PC-9 (cell line): ENCODE measurements at regions of chr3 and their contacts with region 1.

Region 1: DNA sequence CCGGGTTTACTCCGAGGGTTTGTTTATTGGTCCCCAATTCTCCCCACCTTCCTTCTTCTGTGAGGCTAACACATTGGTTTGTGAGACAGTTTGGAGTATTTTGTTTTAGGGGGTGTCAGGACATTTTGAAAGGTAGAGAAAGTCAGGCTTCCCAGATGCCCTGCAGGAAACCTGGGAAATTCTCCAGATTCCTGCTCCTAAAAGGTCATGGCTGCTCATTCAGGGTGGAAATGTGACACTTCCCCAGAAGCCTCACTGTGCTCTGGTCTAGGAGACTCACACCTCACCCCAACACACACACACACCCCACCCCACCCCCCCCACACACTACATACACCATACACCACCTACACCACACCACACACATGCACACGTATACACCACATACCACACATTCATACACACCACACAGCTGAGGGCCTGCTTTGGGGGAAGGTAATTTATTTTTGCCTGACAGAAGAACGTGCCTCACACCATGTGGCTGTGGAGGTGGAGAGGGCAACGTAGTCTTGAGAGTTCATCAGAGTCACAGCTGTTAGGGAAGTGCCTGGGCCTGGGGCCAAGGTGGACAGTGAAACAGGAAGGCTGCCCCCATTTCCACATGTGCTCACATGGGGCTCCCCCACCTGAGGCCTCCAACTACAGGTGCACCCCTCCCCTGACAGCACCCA is 40.4 kb upstream of the LIMD1 start:
- DNase-seq: no peak
- H3K4me3 ChIP-seq: no peak overlapping the region
- H3K27ac ChIP-seq: no peak overlapping the region
- H3K4me1 ChIP-seq: peaks cover 53% of the 10 kb centered on the region
- H3K27me3 ChIP-seq: no peaks in the 10 kb centered on the region
- CTCF ChIP-seq: no peak

Region 2: DNA sequence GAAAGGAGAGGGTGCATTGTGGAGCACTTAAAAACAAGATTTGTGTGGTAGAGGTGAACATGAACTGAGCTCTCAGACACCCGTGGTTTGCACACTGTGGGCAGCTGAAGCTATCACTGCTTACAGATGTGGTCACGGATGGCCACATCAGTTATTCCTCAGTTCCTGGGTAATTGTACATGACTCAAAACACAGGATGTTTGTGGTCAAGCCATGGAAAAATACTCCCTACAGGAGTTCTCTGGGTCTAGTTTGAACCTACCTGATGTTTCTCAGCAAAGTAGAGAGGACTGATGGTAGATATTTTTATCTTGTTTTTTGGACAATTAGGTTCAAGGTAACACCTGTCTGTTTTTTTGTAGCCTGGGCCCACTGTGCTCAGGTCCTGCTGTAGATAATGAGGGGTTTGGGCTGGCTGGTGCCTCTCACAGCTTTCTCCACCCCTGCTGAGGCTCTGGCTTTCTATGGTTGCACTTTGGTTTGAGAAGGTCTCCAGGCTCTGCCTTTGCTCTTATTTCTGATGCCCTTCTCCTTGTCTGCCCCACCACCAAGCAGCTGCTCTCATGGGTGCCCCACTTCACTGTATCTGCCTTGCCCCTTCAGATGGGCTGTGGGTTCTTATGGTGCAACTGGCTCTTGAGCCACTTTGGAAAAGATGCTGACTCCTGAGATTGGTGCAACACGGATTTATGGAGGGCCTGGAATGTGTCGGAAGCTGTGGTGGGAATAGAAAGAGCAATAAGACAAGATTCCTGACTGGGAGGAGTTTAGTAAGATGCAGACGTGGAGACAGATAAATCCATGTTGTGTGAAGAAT is 448.1 kb before region 1 on chr3:
- CTCF ChIA-PET with region 1: interaction called, 10 read pairs
- POLR2A ChIA-PET with region 1: no interaction called
- intact Hi-C with region 1: no loop called
- DNase-seq: no peak
- H3K4me3 ChIP-seq: no peak overlapping the region
- H3K27ac ChIP-seq: no peak overlapping the region; the same call in 1 of the 2 replicates
- H3K4me1 ChIP-seq: no peaks in the 10 kb centered on the region
- H3K27me3 ChIP-seq: no peaks in the 10 kb centered on the region
- CTCF ChIP-seq: no peak

Region 3: GRCh38 chr3:45516829-45517228 is 37.3 kb before region 1 on chr3:
- CTCF ChIA-PET with region 1: no interaction called
- POLR2A ChIA-PET with region 1: interaction called, 23 read pairs
- intact Hi-C with region 1: no loop called
- DNase-seq: no peak
- H3K4me3 ChIP-seq: no peak overlapping the region
- H3K27ac ChIP-seq: no peak overlapping the region
- H3K4me1 ChIP-seq: no peaks in the 10 kb centered on the region
- H3K27me3 ChIP-seq: no peaks in the 10 kb centered on the region
- CTCF ChIP-seq: no peak

Region 4: GRCh38 chr3:45572755-45573154 is 18.6 kb after region 1 on chr3:
- CTCF ChIA-PET with region 1: no interaction called
- POLR2A ChIA-PET with region 1: no interaction called
- intact Hi-C with region 1: loop called (anchors 2 kb)
- DNase-seq: no peak
- H3K4me3 ChIP-seq: no peak overlapping the region
- H3K27ac ChIP-seq: no peak overlapping the region
- H3K4me1 ChIP-seq: peaks cover 19% of the 10 kb centered on the region
- H3K27me3 ChIP-seq: no peaks in the 10 kb centered on the region
- CTCF ChIP-seq: no peak